ENCODE measurements at regions of chr17 and their contacts with region 1.

Region 1: GRCh38 chr17:77140166-77140878 is 447 bp upstream of the SEC14L1 start:
- DNase-seq: peak; percentile 99 to 100 (median 100)
- H3K4me3 ChIP-seq: peak overlapping the region; percentile 84
- H3K4me3 Mint-ChIP-seq: peak overlapping the region; percentile 81 to 94 (median 84)
- H3K27ac ChIP-seq: peak overlapping the region; percentile 83
- H3K27ac Mint-ChIP-seq: peak overlapping the region; percentile 90 to 98 (median 94)
- H3K4me1 ChIP-seq: peaks cover 39% of the 10 kb centered on the region
- H3K4me1 Mint-ChIP-seq: peaks cover 38 to 61% (median 50%) of the 10 kb centered on the region in 3 donors
- H3K27me3 ChIP-seq: no peaks in the 10 kb centered on the region
- H3K27me3 Mint-ChIP-seq: peaks cover 0 to 3% of the 10 kb centered on the region in 2 donors

Region 2: DNA sequence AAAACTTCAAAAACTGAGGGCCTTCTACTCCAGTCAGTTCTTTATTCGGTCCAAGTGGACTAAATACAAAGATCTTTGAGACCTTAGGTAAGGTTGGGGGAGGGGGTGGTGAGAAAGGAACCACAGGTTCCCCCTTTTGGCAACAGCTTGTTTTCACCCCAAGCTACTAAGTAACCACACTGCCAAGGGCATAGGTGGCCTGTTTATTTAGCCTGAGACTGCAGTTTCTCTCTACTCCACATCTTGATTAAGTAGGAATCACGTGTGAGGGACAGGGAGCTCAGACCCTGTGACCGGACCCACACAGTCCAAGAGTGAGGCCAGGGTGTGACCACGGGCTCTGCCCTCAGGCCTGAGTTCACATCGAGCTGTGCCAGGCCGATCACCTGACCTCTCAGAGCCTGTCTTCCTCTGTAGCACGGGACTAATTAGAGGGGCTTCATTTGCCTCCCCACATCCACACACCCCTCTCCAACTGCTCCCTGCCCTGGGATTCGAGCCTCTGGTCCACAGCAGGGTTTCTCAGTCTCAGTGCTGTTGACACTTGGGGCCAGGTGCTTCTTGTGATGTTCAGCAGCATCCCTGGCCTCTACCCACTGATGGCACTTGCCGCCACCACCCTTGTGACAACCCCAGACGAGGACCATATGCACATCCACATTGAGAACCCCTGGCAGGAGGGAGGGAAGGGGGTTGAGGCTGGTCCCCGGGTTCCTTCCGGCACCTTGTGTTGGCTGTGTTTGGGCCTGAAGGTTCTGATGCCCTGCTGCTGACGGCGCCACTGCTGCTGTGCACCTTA is 572.5 kb before region 1 on chr17:
- CTCF ChIA-PET with region 1: no interaction called
- POLR2A ChIA-PET with region 1: interaction called, 10 read pairs
- DNase-seq: peak in 1 of 5 donors; percentile 21
- H3K4me3 ChIP-seq: no peak overlapping the region
- H3K4me3 Mint-ChIP-seq: peak overlapping the region in 5 of 7 donors; percentile 32 to 58 (median 52)
- H3K27ac ChIP-seq: no peak overlapping the region
- H3K27ac Mint-ChIP-seq: peak overlapping the region; percentile 63 to 93 (median 84)
- H3K4me1 ChIP-seq: peaks cover 12% of the 10 kb centered on the region
- H3K4me1 Mint-ChIP-seq: peaks cover 35 to 47% (median 41%) of the 10 kb centered on the region in 3 donors
- H3K27me3 ChIP-seq: no peaks in the 10 kb centered on the region
- H3K27me3 Mint-ChIP-seq: no peaks in the 10 kb centered on the region

Region 3: DNA sequence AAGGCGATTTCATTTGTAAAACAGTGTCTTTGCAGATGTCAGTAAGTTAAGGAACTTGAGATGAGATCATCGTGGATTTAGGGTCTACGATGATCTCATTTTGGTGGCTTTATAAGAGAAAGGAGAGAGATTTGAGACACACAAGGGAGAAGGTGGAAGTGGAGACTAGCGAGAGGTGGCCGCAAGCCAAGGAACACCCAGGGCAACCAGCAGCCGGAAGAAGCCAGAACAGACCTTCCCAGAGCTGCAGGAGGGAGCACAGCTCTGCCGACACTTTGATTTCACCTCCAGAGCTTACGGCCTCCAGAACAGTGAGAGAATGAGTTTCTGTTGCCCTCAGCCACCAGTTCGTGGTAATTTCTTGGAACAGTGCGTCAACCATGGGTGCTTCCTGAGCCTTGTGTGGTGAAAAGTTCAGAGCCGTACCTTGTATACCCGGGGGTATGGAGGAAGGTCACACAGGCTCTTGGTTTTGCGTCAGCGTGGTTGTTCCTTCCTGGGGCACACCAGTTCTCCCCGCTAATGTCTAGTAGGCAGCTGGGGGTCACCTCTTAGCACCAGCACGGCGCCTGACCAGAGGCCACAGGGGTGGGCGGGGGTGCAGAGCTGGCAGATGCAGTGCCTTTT is 12.5 kb before region 1 on chr17:
- CTCF ChIA-PET with region 1: interaction called, 3 read pairs
- POLR2A ChIA-PET with region 1: interaction called, 11 read pairs
- DNase-seq: peak; percentile 44 to 90 (median 76)
- H3K4me3 ChIP-seq: peak overlapping the region; percentile 17
- H3K4me3 Mint-ChIP-seq: peak overlapping the region; percentile 29 to 78 (median 72)
- H3K27ac ChIP-seq: peak overlapping the region; percentile 43
- H3K27ac Mint-ChIP-seq: peak overlapping the region; percentile 84 to 97 (median 90)
- H3K4me1 ChIP-seq: peaks cover 17% of the 10 kb centered on the region
- H3K4me1 Mint-ChIP-seq: peaks cover 8 to 18% (median 14%) of the 10 kb centered on the region in 3 donors
- H3K27me3 ChIP-seq: no peaks in the 10 kb centered on the region
- H3K27me3 Mint-ChIP-seq: no peaks in the 10 kb centered on the region